PC-9 (cell line): ENCODE measurements at regions of chr20 and their contacts with region 1.

Region 1: GRCh38 chr20:57450419-57450818 is 59.2 kb downstream of the RBM38 start:
- DNase-seq: no peak
- H3K4me3 ChIP-seq: no peak overlapping the region
- H3K27ac ChIP-seq: no peak overlapping the region
- H3K4me1 ChIP-seq: peaks cover 6% of the 10 kb centered on the region; the same call in 1 of the 2 replicates
- H3K27me3 ChIP-seq: peaks cover 83% of the 10 kb centered on the region
- CTCF ChIP-seq: no peak

Region 2: GRCh38 chr20:57388953-57389694 is 61.3 kb before region 1 on chr20:
- CTCF ChIA-PET with region 1: no interaction called
- POLR2A ChIA-PET with region 1: interaction called, 10 read pairs
- intact Hi-C with region 1: no loop called
- DNase-seq: peak; percentile 68 to 90
- H3K4me3 ChIP-seq: peak overlapping the region; percentile 58
- H3K27ac ChIP-seq: no peak overlapping the region
- H3K4me1 ChIP-seq: peaks cover 12% of the 10 kb centered on the region
- H3K27me3 ChIP-seq: no peaks in the 10 kb centered on the region
- CTCF ChIP-seq: no peak

Region 3: DNA sequence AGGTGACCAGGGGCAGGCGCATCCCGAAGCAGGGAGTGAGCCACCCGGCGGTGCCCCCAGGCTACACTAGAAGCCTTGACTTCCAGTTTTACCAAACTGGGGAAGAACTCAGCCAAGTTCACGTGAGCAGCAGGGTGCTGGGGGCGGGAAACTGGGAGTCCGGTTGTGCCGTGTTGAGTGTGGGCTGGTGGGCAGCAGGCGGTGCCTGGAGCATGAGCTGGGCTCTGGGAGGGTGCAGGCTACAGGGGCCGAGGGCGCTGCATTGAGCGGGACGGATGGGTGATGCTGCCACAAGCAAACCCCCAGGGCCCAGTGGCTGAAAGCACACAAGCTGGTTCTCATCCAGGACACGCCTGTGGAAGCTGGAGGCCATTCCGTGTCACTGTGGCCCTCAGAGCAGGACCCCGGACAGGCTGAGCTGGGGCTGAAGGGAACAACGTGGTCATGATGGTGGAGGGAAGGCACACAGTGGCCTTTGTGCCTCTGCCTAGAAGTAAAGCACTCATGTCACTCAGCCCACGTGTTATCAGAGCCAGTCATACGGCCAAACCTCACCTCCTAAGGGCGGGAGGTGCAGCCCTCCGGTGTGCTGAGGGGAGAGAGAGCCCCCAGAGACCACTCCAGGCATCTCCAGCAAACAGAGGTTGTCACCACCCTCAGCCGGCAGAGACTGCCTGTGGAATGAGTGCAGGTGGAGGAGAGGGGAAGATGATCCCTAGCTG is 29.7 kb before region 1 on chr20:
- CTCF ChIA-PET with region 1: no interaction called
- POLR2A ChIA-PET with region 1: interaction called, 10 read pairs
- intact Hi-C with region 1: no loop called
- DNase-seq: no peak
- H3K4me3 ChIP-seq: no peak overlapping the region
- H3K27ac ChIP-seq: no peak overlapping the region
- H3K4me1 ChIP-seq: 0 out of 2 replicates have a peak, but pooled peaks cover 5% of the 10 kb centered on the region
- H3K27me3 ChIP-seq: peaks cover 23% of the 10 kb centered on the region
- CTCF ChIP-seq: no peak

Region 4: DNA sequence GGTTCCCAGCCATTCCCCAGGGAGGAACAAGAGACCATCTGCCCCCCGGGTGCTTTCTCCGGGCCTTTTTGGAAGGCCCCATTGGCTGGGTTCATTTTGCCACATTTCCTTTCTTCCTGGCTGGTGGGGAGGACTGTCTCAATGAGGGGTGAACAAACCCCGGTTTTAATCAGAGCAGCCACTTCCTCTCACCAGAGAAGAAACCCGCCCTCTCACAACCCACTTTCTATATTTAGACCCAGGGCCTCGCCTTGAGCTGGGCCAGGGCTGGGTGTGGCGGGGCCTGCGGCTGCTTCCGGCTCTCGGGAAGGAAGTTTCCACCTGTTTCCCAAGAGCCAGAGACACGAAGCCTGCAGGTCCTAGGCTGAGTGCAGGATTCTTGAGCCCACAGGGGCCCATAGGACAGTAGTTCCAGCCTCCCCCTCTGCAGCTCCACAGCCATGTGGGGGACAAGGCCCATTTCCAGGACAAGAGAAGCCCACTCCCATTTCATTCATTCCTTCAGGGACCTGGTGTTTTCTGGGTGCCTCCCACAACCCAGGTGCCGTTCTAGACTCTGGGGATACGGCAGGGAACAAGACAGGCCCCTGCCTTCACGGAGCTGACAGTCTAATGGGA is 17.4 kb before region 1 on chr20:
- CTCF ChIA-PET with region 1: no interaction called
- POLR2A ChIA-PET with region 1: no interaction called
- intact Hi-C with region 1: no loop called
- DNase-seq: peak; percentile 56 to 63
- H3K4me3 ChIP-seq: no peak overlapping the region
- H3K27ac ChIP-seq: no peak overlapping the region
- H3K4me1 ChIP-seq: peaks cover 54% of the 10 kb centered on the region
- H3K27me3 ChIP-seq: no peaks in the 10 kb centered on the region
- CTCF ChIP-seq: no peak